ENCODE measurements at regions of chr18 and their contacts with region 1.

Region 1: GRCh38 chr18:51188024-51188701 is 9.3 kb downstream of the MEX3C start:
- DNase-seq: no peak
- ATAC-seq: no peak
- H3K4me3 ChIP-seq: no peak overlapping the region
- H3K4me3 Mint-ChIP-seq: peak overlapping the region; percentile 60
- H3K27ac ChIP-seq: peak overlapping the region in 1 of 2 donors; percentile 53
- H3K27ac Mint-ChIP-seq: no peak overlapping the region
- H3K4me1 ChIP-seq: peaks cover 20 to 47% of the 10 kb centered on the region in 2 donors
- H3K4me1 Mint-ChIP-seq: peaks cover 70% of the 10 kb centered on the region
- H3K27me3 ChIP-seq: no peaks in the 10 kb centered on the region
- H3K27me3 Mint-ChIP-seq: no peaks in the 10 kb centered on the region
- CTCF ChIP-seq: no peak

Region 2: GRCh38 chr18:51171223-51171622 is 16.9 kb before region 1 on chr18:
- CTCF ChIA-PET with region 1: no interaction called
- POLR2A ChIA-PET with region 1: no interaction called
- intact Hi-C with region 1: loop called (anchors 2 kb)
- DNase-seq: no peak
- ATAC-seq: no peak
- H3K4me3 ChIP-seq: no peak overlapping the region
- H3K4me3 Mint-ChIP-seq: no peak overlapping the region
- H3K27ac ChIP-seq: peak overlapping the region in 1 of 2 donors; percentile 23
- H3K27ac Mint-ChIP-seq: peak overlapping the region; percentile 20
- H3K4me1 ChIP-seq: peaks cover 4 to 14% of the 10 kb centered on the region in 2 donors
- H3K4me1 Mint-ChIP-seq: peaks cover 43% of the 10 kb centered on the region
- H3K27me3 ChIP-seq: no peaks in the 10 kb centered on the region
- H3K27me3 Mint-ChIP-seq: no peaks in the 10 kb centered on the region
- CTCF ChIP-seq: no peak